GM12878 (cell line): ENCODE measurements at regions of chr14 and their contacts with region 1.

Region 1: GRCh38 chr14:52706724-52707706 is at the start of gene PSMC6:
- DNase-seq: peak; percentile 74
- ATAC-seq: peak; percentile 99
- H3K4me3 ChIP-seq: peak within 1 kb of the TSS; percentile 91
- H3K27ac ChIP-seq: peak within 1 kb of the TSS; percentile 88
- H3K4me1 ChIP-seq: 0 out of 2 replicates have a peak, but pooled peaks cover 2% of the 10 kb centered on the region
- H3K27me3 ChIP-seq: no peaks in the 10 kb centered on the region
- CTCF ChIP-seq: no peak
- EP300 ChIP-seq: no peak
- POLR2A ChIP-seq: peak; percentile 91
- RAD21 ChIP-seq: no peak
- polyA plus RNA-seq, gene PSMC6: 181 to 192 TPM

Region 2: DNA sequence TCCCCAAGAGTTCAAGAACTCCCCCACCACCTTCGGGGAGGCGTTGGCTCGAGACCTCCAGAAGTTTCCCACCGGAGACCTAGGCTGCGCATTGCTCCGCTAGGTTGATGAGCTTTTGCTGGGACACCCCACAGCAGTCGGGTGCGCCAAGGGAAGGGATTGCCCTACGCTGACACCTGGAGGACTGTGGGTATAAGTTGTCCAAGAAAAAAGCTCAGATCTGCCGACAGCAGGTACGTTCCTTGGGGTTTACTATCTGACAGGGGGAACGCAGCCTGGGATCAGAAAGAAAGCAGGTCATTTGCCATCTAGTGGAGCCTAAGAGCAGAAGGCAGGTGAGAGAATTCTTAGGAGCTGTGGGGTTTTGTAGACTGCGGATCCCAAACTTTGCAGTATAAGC is 956.5 kb before region 1 on chr14:
- CTCF ChIA-PET with region 1: no interaction called
- POLR2A ChIA-PET with region 1: no interaction called
- RAD21 ChIA-PET with region 1: no interaction called
- SMC1A ChIA-PET with region 1: no interaction called
- in situ Hi-C with region 1: no loop called
- intact Hi-C with region 1: no loop called
- DNase-seq: no peak
- ATAC-seq: no peak
- H3K4me3 ChIP-seq: no peak overlapping the region
- H3K27ac ChIP-seq: no peak overlapping the region
- H3K4me1 ChIP-seq: no peaks in the 10 kb centered on the region
- H3K27me3 ChIP-seq: no peaks in the 10 kb centered on the region
- CTCF ChIP-seq: no peak; a peak in 2 of 6 replicates
- EP300 ChIP-seq: no peak
- POLR2A ChIP-seq: no peak
- RAD21 ChIP-seq: peak; percentile 16; the same call in 1 of the 2 replicates

Region 3: GRCh38 chr14:51922624-51923023 is 784.4 kb before region 1 on chr14:
- CTCF ChIA-PET with region 1: no interaction called
- POLR2A ChIA-PET with region 1: no interaction called
- RAD21 ChIA-PET with region 1: no interaction called
- SMC1A ChIA-PET with region 1: no interaction called
- in situ Hi-C with region 1: no loop called
- intact Hi-C with region 1: no loop called
- DNase-seq: no peak
- ATAC-seq: no peak
- H3K4me3 ChIP-seq: no peak overlapping the region
- H3K27ac ChIP-seq: no peak overlapping the region
- H3K4me1 ChIP-seq: no peaks in the 10 kb centered on the region
- H3K27me3 ChIP-seq: no peaks in the 10 kb centered on the region
- CTCF ChIP-seq: no peak
- EP300 ChIP-seq: no peak
- POLR2A ChIP-seq: no peak
- RAD21 ChIP-seq: no peak

Region 4: DNA sequence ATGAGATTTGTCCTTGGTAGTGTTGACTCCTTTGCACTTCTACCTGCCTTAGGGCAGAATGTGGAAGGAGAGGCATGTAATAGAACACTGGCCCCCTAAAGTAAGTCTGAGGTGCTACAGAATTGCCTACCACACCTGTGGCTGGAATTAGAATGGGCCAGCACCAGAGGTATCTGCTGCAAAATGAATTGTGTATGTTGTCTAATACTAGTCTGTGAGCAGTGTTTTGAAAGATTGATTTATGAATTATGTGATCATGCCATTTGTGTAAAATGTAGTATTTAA is 17.3 kb after region 1 on chr14:
- CTCF ChIA-PET with region 1: interaction called, 4 read pairs
- POLR2A ChIA-PET with region 1: interaction called, 5 read pairs
- RAD21 ChIA-PET with region 1: interaction called, 6 read pairs
- SMC1A ChIA-PET with region 1: interaction called, 13 read pairs
- in situ Hi-C with region 1: no loop called
- intact Hi-C with region 1: no loop called
- DNase-seq: no peak
- ATAC-seq: peak; percentile 51
- H3K4me3 ChIP-seq: no peak overlapping the region
- H3K27ac ChIP-seq: no peak overlapping the region
- H3K4me1 ChIP-seq: peaks cover 14% of the 10 kb centered on the region
- H3K27me3 ChIP-seq: no peaks in the 10 kb centered on the region
- CTCF ChIP-seq: no peak
- EP300 ChIP-seq: no peak
- POLR2A ChIP-seq: no peak
- RAD21 ChIP-seq: no peak

Region 5: DNA sequence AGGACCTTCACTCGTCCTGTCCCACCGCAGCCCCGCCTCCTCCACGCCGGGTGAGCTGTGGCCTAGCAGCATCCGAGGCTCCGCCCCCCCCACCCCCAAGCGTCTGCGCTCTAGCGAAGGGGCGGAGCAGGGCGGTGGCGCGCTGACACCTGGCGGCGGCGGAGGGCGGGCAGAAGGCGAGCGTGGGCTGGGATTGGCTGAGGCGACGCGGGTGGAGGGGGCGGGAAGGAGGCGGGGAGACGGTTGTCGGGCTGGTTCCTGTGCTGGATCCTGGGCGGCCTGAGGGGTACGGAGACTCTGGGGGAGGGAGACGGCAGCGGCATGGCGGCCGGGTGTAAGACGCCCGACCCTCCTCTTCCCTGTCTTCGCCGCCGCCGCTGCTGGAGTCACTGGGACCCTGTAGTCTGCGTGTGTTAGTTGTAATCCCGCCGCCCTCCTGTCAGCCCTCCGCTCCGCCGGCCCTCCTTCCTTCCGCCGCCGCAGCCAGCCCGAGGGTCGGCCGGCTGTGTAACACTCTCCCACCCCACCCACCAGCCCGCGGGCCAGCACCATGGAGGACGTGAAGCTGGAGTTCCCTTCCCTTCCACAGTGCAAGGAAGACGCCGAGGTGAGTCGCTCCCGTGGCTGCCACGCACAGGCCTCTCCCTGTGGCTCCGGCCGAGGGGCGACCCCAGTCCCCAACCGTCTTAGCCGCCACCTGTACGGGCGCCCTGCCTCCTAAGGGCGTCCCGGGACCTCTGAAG is 23.1 kb after region 1 on chr14 and contains the start of gene STYX:
- CTCF ChIA-PET with region 1: interaction called, 3 read pairs
- POLR2A ChIA-PET with region 1: interaction called, 5 read pairs
- RAD21 ChIA-PET with region 1: interaction called, 6 read pairs
- SMC1A ChIA-PET with region 1: interaction called, 11 read pairs
- in situ Hi-C with region 1: no loop called
- intact Hi-C with region 1: no loop called
- DNase-seq: peak; percentile 93
- ATAC-seq: peak; percentile 98
- H3K4me3 ChIP-seq: peak within 1 kb of the TSS; percentile 75
- H3K27ac ChIP-seq: peak within 1 kb of the TSS; percentile 71
- H3K4me1 ChIP-seq: no peaks in the 10 kb centered on the region
- H3K27me3 ChIP-seq: no peaks in the 10 kb centered on the region
- CTCF ChIP-seq: no peak
- EP300 ChIP-seq: no peak
- POLR2A ChIP-seq: peak; percentile 96
- RAD21 ChIP-seq: no peak
- polyA plus RNA-seq, gene STYX: 5.0 to 10.1 TPM